Caco-2 (cell line): ENCODE measurements at regions of chr1 and their contacts with region 1.

Region 1: GRCh38 chr1:242670019-242670418 is 145.5 kb upstream of the PLD5 start:
- DNase-seq: no peak
- H3K4me3 ChIP-seq: no peak overlapping the region
- H3K4me3 Mint-ChIP-seq: no peak overlapping the region
- H3K27ac Mint-ChIP-seq: no peak overlapping the region
- H3K4me1 ChIP-seq: no peaks in the 10 kb centered on the region
- H3K4me1 Mint-ChIP-seq: no peaks in the 10 kb centered on the region
- H3K27me3 ChIP-seq: no peaks in the 10 kb centered on the region
- H3K27me3 Mint-ChIP-seq: no peaks in the 10 kb centered on the region
- CTCF ChIP-seq: no peak

Region 2: DNA sequence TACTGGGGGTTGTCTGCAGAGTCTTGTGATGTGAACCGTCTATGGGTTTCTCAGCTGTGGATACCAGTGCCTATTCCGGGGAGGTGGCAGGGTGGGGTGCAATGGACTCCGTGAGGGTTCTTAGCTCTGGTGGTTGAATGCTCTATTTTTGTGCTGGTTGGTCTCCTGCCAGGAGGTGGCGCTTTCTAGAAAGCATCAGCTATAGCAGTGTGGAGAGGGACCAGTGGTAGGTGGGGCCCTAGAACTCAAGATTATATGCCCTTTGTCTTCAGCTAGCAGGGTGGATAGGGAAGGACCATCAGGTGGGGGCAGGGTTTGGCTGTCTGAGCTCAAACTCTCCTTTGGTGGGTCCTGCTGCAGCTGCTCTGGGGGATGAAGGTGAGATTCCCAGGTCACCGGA is 18.2 kb before region 1 on chr1:
- CTCF ChIA-PET with region 1: no interaction called
- POLR2A ChIA-PET with region 1: no interaction called
- intact Hi-C with region 1: no loop called
- DNase-seq: peak; percentile 35 to 42
- H3K4me3 ChIP-seq: no peak overlapping the region
- H3K4me3 Mint-ChIP-seq: no peak overlapping the region
- H3K27ac Mint-ChIP-seq: no peak overlapping the region
- H3K4me1 ChIP-seq: no peaks in the 10 kb centered on the region
- H3K4me1 Mint-ChIP-seq: no peaks in the 10 kb centered on the region
- H3K27me3 ChIP-seq: no peaks in the 10 kb centered on the region
- H3K27me3 Mint-ChIP-seq: no peaks in the 10 kb centered on the region
- CTCF ChIP-seq: peak in 1 of 2 experiments; percentile 7

Region 3: DNA sequence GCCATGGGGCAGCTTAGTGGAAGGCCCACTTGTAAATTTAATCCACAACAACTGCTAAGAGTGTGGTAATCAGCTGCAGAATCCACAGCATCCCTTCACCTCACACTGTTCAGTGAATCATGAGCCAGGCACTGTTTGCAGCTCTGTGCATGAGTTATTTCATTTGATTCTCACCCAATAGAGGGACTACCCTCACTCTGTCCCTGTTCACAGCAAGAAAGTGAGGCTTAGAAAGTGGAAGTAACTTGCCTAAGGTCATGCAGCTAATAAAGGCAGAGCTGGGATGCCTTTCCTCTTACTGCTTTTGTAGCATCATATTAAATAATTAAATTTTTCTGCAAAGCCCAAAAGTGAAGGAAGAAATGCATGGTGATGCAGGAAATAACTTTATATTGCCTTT is 200.9 kb after region 1 on chr1:
- CTCF ChIA-PET with region 1: no interaction called
- POLR2A ChIA-PET with region 1: interaction called, 10 read pairs
- intact Hi-C with region 1: no loop called
- DNase-seq: no peak
- H3K4me3 ChIP-seq: no peak overlapping the region
- H3K4me3 Mint-ChIP-seq: no peak overlapping the region
- H3K27ac Mint-ChIP-seq: no peak overlapping the region
- H3K4me1 ChIP-seq: no peaks in the 10 kb centered on the region
- H3K4me1 Mint-ChIP-seq: no peaks in the 10 kb centered on the region
- H3K27me3 ChIP-seq: no peaks in the 10 kb centered on the region
- H3K27me3 Mint-ChIP-seq: peaks cover 2% of the 10 kb centered on the region
- CTCF ChIP-seq: no peak